Head of caudate nucleus (tissue), 42 donors: ENCODE measurements at regions of chr3 and their contacts with region 1.

Region 1: DNA sequence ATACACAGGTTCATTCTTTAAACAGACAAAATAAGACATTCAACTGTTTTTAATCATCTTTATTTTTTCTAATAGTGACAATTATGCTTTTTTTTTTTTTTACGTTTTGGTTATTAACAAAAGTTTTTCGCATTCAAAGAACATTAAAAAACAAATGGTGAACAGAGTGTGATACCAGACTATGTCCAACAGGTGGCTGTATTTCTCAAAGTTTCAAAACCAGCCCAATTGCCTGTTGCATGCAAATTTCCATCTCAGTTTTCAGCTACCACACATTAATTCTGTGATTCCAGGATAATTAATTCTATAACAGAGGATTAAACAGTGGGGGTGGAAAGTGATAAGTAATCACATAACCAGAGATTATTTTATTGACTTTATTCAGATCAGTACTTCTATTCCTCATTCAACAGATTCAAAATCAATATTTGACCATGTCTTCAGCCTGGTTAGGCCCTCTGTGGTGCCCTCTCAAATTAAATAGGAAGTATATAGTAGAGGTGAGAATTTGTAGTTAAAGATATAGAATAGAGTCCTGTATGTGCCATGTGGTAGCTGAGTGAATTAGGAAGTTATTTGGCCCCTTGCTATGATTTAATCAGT is 122.2 kb upstream of the DCBLD2 start:
- DNase-seq: peak in 14 of 42 donors; percentile 2 to 60 (median 22)

Region 2: GRCh38 chr3:98962189-98962930 is 61.3 kb before region 1 on chr3:
- intact Hi-C with region 1: no loop called
- DNase-seq: no peak

Region 3: GRCh38 chr3:99172736-99173657 is 149.3 kb after region 1 on chr3:
- intact Hi-C with region 1: loop called (anchors 5 kb)
- DNase-seq: peak in 41 of 42 donors; percentile 11 to 83 (median 58)

Region 4: GRCh38 chr3:99753268-99753975 is 729.7 kb after region 1 on chr3:
- intact Hi-C with region 1: loop called (anchors 10 kb)
- DNase-seq: peak in 31 of 42 donors; percentile 8 to 75 (median 40)